ENCODE measurements at regions of chr21 and their contacts with region 1.

Region 1: GRCh38 chr21:41895643-41896493 is 16.7 kb upstream of the PRDM15 start:
- DNase-seq: peak; percentile 71
- ATAC-seq: peak; percentile 93
- H3K4me3 ChIP-seq: no peak overlapping the region
- H3K4me3 Mint-ChIP-seq: no peak overlapping the region
- H3K27ac ChIP-seq: peak overlapping the region in 1 of 2 donors; percentile 8
- H3K27ac Mint-ChIP-seq: peak overlapping the region; percentile 29
- H3K4me1 ChIP-seq: peaks cover 7 to 10% of the 10 kb centered on the region in 2 donors
- H3K4me1 Mint-ChIP-seq: peaks cover 13% of the 10 kb centered on the region
- H3K27me3 ChIP-seq: no peaks in the 10 kb centered on the region
- H3K27me3 Mint-ChIP-seq: no peaks in the 10 kb centered on the region
- CTCF ChIP-seq: no peak

Region 2: GRCh38 chr21:41933313-41934086 is 37.6 kb after region 1 on chr21:
- CTCF ChIA-PET with region 1: no interaction called
- POLR2A ChIA-PET with region 1: no interaction called
- intact Hi-C with region 1: loop called (anchors 5 kb)
- DNase-seq: no peak
- ATAC-seq: no peak
- H3K4me3 ChIP-seq: peak overlapping the region in 3 of 5 experiments; percentile 1 to 36 (median 23)
- H3K4me3 Mint-ChIP-seq: peak overlapping the region; percentile 77
- H3K27ac ChIP-seq: no peak overlapping the region
- H3K27ac Mint-ChIP-seq: peak overlapping the region; percentile 83
- H3K4me1 ChIP-seq: peaks cover 24 to 41% of the 10 kb centered on the region in 2 donors
- H3K4me1 Mint-ChIP-seq: peaks cover 43% of the 10 kb centered on the region
- H3K27me3 ChIP-seq: peaks cover 0 to 3% (median under 1%) of the 10 kb centered on the region in 4 experiments
- H3K27me3 Mint-ChIP-seq: peaks cover 21% of the 10 kb centered on the region
- CTCF ChIP-seq: no peak

Region 3: DNA sequence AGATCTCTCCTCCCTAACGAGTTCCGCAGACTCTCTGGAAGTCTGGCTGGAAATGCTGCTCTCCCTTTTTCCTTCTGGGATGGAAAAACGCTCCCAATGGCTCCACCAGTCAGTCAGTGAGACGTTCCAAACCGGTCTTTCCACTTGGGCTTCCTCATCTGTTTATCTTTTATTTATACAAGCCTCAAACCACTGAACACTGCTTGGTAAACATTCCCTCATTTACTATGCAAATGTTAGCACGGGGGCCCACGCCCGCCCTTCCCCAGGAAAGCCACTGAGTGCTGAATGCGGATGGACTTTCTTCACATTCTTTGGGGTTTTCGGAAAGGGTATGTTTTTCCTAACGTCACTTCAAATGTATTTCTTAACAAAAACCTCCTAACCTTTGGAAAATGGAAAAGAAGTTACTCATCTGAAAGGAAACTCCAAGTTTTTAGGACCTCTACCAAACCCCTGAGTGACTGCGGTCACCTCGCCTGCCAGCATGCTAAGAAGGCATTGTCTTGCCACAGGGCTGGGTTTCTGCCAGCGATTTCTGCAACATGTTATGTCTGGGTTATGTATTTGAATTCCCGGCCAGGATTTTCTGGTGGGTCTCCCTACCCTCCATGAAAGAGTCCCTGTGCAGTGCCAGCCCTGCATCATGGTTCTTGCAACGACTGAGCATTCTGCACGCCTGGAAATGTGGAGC is 161.3 kb after region 1 on chr21:
- CTCF ChIA-PET with region 1: no interaction called
- POLR2A ChIA-PET with region 1: no interaction called
- intact Hi-C with region 1: no loop called
- DNase-seq: no peak
- ATAC-seq: no peak
- H3K4me3 ChIP-seq: no peak overlapping the region
- H3K4me3 Mint-ChIP-seq: no peak overlapping the region
- H3K27ac ChIP-seq: no peak overlapping the region
- H3K27ac Mint-ChIP-seq: peak overlapping the region; percentile 53
- H3K4me1 ChIP-seq: peaks cover 28 to 48% of the 10 kb centered on the region in 2 donors
- H3K4me1 Mint-ChIP-seq: peaks cover 47% of the 10 kb centered on the region
- H3K27me3 ChIP-seq: no peaks in the 10 kb centered on the region
- H3K27me3 Mint-ChIP-seq: no peaks in the 10 kb centered on the region
- CTCF ChIP-seq: no peak